ENCODE measurements at regions of chr2 and their contacts with region 1.

Region 1: DNA sequence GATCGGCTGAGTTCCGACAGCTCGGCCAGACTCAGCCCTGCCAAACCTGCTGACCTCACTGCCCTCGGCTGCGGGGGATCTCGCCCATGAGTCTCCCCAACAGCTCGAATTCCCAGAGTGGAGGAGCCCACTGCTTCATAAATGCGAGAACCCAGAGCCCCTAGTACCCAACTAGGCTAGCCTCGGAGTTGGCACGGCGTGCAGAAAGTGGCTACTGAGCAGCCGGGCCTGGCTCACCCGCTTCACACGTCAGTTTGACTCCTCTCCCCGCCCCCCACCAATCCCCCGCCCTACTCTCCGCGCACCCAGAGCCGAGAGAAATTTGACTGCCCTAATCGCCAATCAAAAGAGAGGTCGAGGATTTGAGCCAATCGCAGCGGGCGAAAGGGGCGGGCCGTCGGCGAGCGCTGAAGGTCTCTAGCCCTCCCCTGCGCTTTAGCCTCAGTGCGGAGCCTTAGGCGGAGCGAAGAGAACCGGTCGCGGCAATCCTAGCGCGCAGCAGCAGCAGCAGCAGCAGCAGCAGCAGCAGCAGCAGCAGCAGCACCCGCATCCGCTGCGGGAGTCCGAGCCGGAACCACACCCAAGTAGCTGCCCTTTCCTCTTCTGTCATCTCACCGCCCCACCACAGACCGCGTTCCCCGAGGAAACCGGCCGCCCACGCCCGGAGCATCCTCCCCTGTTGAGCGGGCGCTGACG is at the start of gene GLS:
- DNase-seq: peak; percentile 95
- H3K4me3 Mint-ChIP-seq: peak within 1 kb of the TSS; percentile 91
- H3K27ac Mint-ChIP-seq: peak within 1 kb of the TSS; percentile 97
- H3K4me1 Mint-ChIP-seq: peaks cover 40% of the 10 kb centered on the region
- H3K27me3 Mint-ChIP-seq: no peaks in the 10 kb centered on the region
- total RNA-seq, gene GLS: 220 and 237 TPM in 2 replicates

Region 2: DNA sequence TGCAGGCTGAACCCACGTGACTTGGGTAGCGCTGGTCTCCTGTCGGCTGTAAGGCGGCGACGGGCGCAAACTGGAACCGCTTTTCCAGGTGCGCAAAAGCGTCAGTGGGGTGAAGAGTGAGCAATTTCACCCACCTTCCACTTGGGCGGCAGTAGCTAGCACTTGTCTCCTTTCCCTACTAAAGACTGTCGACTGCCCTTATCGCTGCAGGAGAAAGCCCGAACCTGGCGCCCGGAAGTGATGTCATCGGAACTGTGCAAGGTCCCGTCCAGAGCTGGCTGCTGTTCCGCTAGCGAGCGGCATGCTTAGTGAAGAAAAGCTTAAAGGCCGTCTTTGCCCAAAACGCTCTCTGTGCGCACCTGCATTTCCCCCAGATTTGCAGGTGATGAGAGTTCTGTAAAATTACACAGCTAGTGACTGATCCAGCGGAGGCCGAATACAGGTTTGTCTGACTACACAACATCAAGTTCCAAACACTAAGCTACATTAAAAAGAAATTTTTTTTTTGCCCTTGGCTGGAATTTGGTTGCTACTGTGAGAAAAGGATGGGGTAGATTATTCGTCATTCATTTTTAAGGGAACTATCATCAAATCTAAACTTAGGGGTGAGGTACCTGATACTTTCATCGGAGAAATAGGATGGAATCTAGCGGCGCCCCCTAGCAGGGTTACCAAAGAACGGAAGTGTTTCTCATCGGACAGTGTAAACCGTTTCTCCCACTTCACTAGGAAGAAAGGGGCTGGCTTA is 1117.8 kb before region 1 on chr2 and contains the start of gene OSGEPL1:
- intact Hi-C with region 1: loop called (anchors 2 kb)
- DNase-seq: peak; percentile 88
- H3K4me3 Mint-ChIP-seq: peak within 1 kb of the TSS; percentile 92
- H3K27ac Mint-ChIP-seq: peak within 1 kb of the TSS; percentile 99
- H3K4me1 Mint-ChIP-seq: peaks cover 14% of the 10 kb centered on the region
- H3K27me3 Mint-ChIP-seq: no peaks in the 10 kb centered on the region
- total RNA-seq, gene OSGEPL1: 8.3 and 11.4 TPM in 2 replicates

Region 3: GRCh38 chr2:190534310-190535120 is 346.0 kb before region 1 on chr2 and contains the start of gene NEMP2:
- intact Hi-C with region 1: loop called (anchors 2 kb)
- DNase-seq: peak; percentile 82
- H3K4me3 Mint-ChIP-seq: peak within 1 kb of the TSS; percentile 95
- H3K27ac Mint-ChIP-seq: peak within 1 kb of the TSS; percentile 99
- H3K4me1 Mint-ChIP-seq: peaks cover 57% of the 10 kb centered on the region
- H3K27me3 Mint-ChIP-seq: no peaks in the 10 kb centered on the region
- total RNA-seq, gene NEMP2: 11.7 and 13.6 TPM in 2 replicates

Region 4: GRCh38 chr2:190781604-190782198 is 98.8 kb before region 1 on chr2:
- intact Hi-C with region 1: loop called (anchors 2 kb)
- DNase-seq: peak; percentile 11
- H3K4me3 Mint-ChIP-seq: no peak overlapping the region
- H3K27ac Mint-ChIP-seq: peak overlapping the region; percentile 45
- H3K4me1 Mint-ChIP-seq: peaks cover 43% of the 10 kb centered on the region
- H3K27me3 Mint-ChIP-seq: no peaks in the 10 kb centered on the region

Region 5: GRCh38 chr2:190812506-190813294 is 67.8 kb before region 1 on chr2:
- intact Hi-C with region 1: no loop called
- DNase-seq: no peak
- H3K4me3 Mint-ChIP-seq: no peak overlapping the region
- H3K27ac Mint-ChIP-seq: no peak overlapping the region
- H3K4me1 Mint-ChIP-seq: peaks cover 24% of the 10 kb centered on the region
- H3K27me3 Mint-ChIP-seq: no peaks in the 10 kb centered on the region

Region 6: GRCh38 chr2:190947711-190948251 is 67.3 kb after region 1 on chr2:
- intact Hi-C with region 1: loop called (anchors 1 kb)
- DNase-seq: no peak
- H3K4me3 Mint-ChIP-seq: no peak overlapping the region
- H3K27ac Mint-ChIP-seq: peak overlapping the region; percentile 51
- H3K4me1 Mint-ChIP-seq: peaks cover 6% of the 10 kb centered on the region
- H3K27me3 Mint-ChIP-seq: no peaks in the 10 kb centered on the region

Region 7: DNA sequence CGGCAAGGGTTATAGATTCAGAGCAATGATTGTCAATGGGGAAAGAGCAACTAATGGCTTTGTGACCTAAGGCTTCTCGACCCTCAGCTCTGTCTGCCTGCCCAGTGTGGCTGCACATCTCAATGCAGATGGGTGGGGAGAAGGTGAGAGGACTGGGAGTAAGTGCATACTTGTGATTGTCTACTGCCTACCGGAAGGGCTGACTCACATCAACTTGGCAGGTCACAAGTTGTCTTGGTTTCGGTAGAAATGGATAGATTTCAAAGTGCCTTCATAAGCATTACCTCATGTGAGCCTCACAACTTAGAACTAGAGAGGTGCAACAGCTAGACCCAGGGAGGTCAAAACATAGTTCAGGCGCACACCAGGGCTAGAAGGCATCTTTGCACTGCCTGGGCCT is 104.1 kb after region 1 on chr2:
- intact Hi-C with region 1: no loop called
- DNase-seq: no peak
- H3K4me3 Mint-ChIP-seq: no peak overlapping the region
- H3K27ac Mint-ChIP-seq: peak overlapping the region; percentile 46
- H3K4me1 Mint-ChIP-seq: peaks cover 78% of the 10 kb centered on the region
- H3K27me3 Mint-ChIP-seq: no peaks in the 10 kb centered on the region

Region 8: DNA sequence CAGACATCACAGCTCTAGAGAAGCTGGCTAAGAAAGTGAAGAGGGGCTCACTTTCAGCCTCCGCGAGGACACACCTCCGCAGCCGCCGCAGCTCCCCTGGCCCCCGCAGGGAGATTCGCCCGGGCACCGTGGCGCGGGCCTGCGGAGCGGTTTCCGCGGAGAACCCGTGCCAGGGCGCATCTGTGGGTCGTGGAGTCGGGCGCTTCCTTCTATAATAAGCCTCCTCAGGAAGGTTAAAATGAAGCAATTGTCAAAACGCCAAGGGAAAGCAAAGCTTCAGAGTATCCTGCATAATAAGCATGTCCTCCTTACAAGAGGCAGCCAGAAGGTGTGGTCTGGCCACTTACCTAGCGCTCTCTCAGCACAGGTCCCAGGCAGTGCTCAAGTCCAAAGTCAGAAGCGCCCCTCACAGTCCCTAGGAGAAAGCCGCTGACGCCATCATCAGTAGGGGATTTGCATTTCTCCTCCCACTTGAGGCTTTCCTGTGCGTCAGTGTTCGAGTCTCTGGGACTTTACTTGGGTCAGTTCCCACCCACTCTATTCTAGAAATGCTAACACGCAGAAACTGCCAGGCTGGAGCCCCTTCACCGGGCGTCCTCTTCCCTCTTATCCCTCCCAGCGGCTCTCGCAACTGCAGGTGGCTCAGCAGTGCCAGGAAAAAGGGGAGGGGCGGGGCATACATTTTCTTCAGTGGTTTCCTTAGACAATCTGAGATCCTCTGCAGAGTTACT is 270.2 kb after region 1 on chr2 and contains the start of gene STAT4:
- intact Hi-C with region 1: loop called (anchors 1 kb)
- DNase-seq: peak; percentile 78
- H3K4me3 Mint-ChIP-seq: peak within 1 kb of the TSS; percentile 95
- H3K27ac Mint-ChIP-seq: peak within 1 kb of the TSS; percentile 95
- H3K4me1 Mint-ChIP-seq: peaks cover 85% of the 10 kb centered on the region
- H3K27me3 Mint-ChIP-seq: no peaks in the 10 kb centered on the region
- total RNA-seq, gene STAT4: 57.4 and 62.1 TPM in 2 replicates

Measured in activated T-helper 1 cell treated with anti-CD3 and anti-CD28 coated beads, Interleukin-12 subunit alpha, Interleukin-12 subunit beta, Interleukin-2, Interleukin-4 antibody, amounts not matched to agents 30 ng/mL and 10 ng/mL and 1 ng/mL, durations not matched to agents 14 hours and 24 hours and 36 hours (primary cell).